SK-N-SH (cell line): ENCODE measurements at regions of chr12 and their contacts with region 1.

Region 1: GRCh38 chr12:19507823-19508222 is 68.5 kb downstream of the AEBP2 start:
- DNase-seq: peak; percentile 38
- H3K4me3 ChIP-seq: no peak overlapping the region
- H3K27ac ChIP-seq: peak overlapping the region in 1 of 2 experiments; percentile 24; a peak in 1 of 4 replicates
- H3K4me1 ChIP-seq: peaks cover 0 to 10% of the 10 kb centered on the region in 2 experiments; a peak in 2 of 4 replicates
- H3K27me3 ChIP-seq: no peaks in the 10 kb centered on the region
- CTCF ChIP-seq: peak; percentile 59
- EP300 ChIP-seq: no peak
- RAD21 ChIP-seq: peak; percentile 86

Region 2: DNA sequence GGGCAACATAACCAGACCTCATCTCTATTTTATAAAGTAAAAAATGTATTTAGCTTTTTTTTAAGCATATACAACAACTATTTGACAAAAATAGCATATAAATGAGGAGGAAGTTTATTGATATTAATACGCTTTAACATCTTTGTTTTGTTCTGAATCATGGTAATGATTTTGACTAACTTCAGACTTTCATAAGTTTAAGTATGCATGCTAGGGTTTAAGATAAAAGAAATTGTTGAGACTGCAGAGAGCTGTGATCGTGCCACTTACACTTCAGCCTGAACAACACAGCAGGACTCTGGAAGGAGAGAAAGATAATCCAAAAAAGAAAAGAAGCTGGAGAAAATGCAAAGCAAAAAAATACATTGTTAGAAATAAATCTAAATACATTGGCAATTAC is 156.5 kb before region 1 on chr12:
- CTCF ChIA-PET with region 1: no interaction called
- POLR2A ChIA-PET with region 1: no interaction called
- DNase-seq: no peak
- H3K4me3 ChIP-seq: no peak overlapping the region
- H3K27ac ChIP-seq: no peak overlapping the region
- H3K4me1 ChIP-seq: no peaks in the 10 kb centered on the region
- H3K27me3 ChIP-seq: no peaks in the 10 kb centered on the region
- CTCF ChIP-seq: no peak
- EP300 ChIP-seq: no peak
- RAD21 ChIP-seq: no peak

Region 3: DNA sequence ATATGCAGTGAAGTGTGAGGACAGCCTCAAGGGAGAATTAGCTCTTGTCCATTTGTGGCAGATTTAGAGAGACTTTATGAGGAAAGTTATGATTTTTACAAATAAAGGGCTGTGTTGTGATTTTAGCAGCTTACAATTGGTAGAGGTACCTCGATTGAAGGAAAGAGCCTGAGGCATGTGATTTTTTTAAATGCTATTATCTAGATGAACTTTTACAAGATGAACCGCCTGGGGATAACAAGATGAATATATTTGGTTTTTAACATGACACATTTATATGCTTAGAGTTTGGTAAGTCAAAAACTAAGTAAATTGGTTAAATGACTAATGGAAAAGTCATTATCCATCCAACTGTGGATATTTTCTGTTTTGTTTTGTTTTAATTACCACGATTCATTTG is 16.0 kb before region 1 on chr12:
- CTCF ChIA-PET with region 1: interaction called, 12 read pairs
- POLR2A ChIA-PET with region 1: no interaction called
- DNase-seq: no peak
- H3K4me3 ChIP-seq: no peak overlapping the region
- H3K27ac ChIP-seq: no peak overlapping the region
- H3K4me1 ChIP-seq: 0 out of 4 replicates have a peak, but pooled peaks cover 0 to 8% of the 10 kb centered on the region in 2 experiments
- H3K27me3 ChIP-seq: no peaks in the 10 kb centered on the region
- CTCF ChIP-seq: no peak
- EP300 ChIP-seq: no peak
- RAD21 ChIP-seq: no peak

Region 4: DNA sequence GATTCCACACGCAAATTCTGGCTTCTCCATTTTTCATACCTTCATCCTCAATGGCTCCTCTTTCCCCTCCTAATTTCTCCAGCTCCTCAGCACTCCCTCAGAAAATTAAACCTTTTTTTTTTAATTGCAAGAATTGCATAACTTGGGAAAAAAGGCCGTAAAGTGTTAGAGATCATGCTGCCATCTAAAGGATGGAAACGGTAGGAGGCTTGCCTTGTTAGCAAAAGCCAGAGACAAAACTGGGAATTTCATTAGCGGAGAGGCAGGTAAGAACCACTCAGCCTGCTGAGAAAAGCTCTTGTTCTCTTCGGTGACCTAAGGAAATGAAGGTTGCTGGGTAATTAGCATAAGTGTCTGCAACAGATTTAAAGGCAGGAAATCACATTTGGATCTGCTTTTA is 135.8 kb after region 1 on chr12:
- CTCF ChIA-PET with region 1: interaction called, 44 read pairs
- POLR2A ChIA-PET with region 1: no interaction called
- DNase-seq: peak; percentile 56
- H3K4me3 ChIP-seq: no peak overlapping the region; a peak in 1 of 4 replicates
- H3K27ac ChIP-seq: no peak overlapping the region
- H3K4me1 ChIP-seq: no peaks in the 10 kb centered on the region; a peak in 2 of 4 replicates
- H3K27me3 ChIP-seq: no peaks in the 10 kb centered on the region
- CTCF ChIP-seq: peak; percentile 63
- EP300 ChIP-seq: no peak
- RAD21 ChIP-seq: peak; percentile 85